Sciatic nerve (tissue), 2 donors: ENCODE measurements at regions of chr19 and their contacts with region 1.

Region 1: GRCh38 chr19:13604902-13605586 is 98.8 kb upstream of the CACNA1A start:
- DNase-seq: no peak
- ATAC-seq: no peak

Region 2: DNA sequence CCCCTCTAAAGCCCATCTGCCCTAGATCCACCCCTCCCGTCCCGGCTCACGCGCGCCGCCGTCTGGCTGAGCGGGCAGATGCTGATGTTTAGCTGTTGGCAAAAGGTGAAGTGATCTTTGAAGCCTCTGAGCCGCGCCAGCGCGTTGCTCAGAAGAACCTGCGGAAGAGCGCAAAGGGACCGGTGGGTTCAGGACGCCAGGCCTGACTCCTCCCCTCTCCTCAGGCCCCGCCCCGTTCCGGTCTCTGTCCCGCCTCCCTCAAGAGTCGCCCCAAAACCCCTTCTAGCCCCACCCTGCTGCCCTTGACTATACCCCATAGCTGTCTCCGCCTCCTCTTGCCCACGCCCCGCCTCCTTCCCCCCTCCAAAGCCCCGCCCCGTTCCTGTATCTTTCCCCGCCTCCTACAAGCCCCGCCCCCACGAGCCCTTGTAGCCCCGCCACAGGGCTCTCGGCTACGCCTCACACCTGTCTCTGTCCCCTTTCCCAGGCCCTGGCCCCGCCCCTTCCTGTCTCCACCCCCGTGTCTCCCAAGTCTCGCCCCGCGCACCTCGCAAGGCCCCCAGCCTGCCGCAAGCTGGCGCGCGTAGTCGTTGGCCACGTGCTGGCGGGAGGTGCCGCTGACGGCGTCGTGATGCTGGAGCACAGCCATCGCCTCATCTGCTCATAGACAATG is 948.0 kb before region 1 on chr19:
- intact Hi-C with region 1: loop called (anchors 5 kb)
- DNase-seq: no peak
- ATAC-seq: no peak

Region 3: DNA sequence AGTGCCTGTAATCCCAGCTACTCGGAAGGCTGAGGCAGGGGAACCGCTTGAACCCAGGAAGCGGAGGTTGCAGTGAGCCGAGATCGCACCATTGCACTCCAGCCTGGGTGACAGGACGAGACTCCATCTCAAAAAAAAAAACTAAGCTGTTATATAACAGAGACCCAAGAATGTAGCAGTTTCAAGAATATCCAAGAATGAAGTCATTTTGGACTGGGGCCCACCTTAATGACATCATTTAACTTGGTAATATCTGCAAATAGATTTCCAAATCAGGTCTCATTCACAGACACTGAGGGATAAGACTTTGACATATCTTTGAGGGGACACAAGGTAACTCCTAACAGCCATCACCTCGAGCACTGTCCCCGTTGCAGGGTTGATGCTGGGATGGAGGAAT is 122.8 kb after region 1 on chr19:
- intact Hi-C with region 1: loop called (anchors 10 kb)
- DNase-seq: no peak
- ATAC-seq: no peak